PC-9 (cell line): ENCODE measurements at regions of chr3 and their contacts with region 1.

Region 1: GRCh38 chr3:42118762-42119361 is 27.7 kb downstream of the TRAK1 start:
- DNase-seq: peak; percentile 53 to 68
- H3K4me3 ChIP-seq: no peak overlapping the region
- H3K27ac ChIP-seq: no peak overlapping the region
- H3K4me1 ChIP-seq: peaks cover 28% of the 10 kb centered on the region
- H3K27me3 ChIP-seq: no peaks in the 10 kb centered on the region
- CTCF ChIP-seq: peak; percentile 66

Region 2: GRCh38 chr3:42080452-42080891 is 38.4 kb before region 1 on chr3:
- CTCF ChIA-PET with region 1: no interaction called
- POLR2A ChIA-PET with region 1: no interaction called
- intact Hi-C with region 1: loop called (anchors 2 kb)
- DNase-seq: peak; percentile 86 to 96
- H3K4me3 ChIP-seq: peak overlapping the region; percentile 31; the same call in 1 of the 2 replicates
- H3K27ac ChIP-seq: peak overlapping the region; percentile 87
- H3K4me1 ChIP-seq: peaks cover 42% of the 10 kb centered on the region
- H3K27me3 ChIP-seq: no peaks in the 10 kb centered on the region
- CTCF ChIP-seq: no peak

Region 3: DNA sequence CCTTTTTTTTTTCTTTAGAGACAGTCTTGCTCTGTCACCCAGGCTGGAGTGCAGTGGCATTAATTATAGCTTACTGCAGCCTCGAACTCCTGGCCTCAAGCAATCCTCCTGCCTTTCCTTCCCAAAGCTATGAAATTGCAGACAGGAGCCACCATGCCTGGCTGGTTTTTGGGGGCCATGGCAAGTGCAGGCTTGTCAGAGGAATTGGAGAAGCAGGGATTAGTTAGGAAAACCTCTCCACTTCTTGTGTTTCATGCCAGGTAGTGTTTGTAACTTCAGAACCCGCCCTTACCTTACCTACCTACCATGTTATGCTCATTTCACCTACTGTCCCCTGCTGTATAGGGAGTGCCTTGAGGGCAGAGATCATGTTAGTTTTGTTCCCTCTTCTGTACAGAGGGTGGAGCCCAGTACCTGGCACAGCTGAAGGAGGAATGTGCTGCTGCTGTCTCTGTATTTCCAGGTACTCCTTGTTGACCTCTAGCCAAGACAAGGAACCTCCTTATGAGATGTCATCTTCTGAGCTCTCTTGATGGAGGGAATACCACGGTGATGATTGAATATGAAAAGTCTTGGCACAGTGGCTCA is 16.1 kb after region 1 on chr3:
- CTCF ChIA-PET with region 1: interaction called, 5 read pairs
- POLR2A ChIA-PET with region 1: no interaction called
- intact Hi-C with region 1: loop called (anchors 2 kb)
- DNase-seq: peak; percentile 58 to 72
- H3K4me3 ChIP-seq: no peak overlapping the region
- H3K27ac ChIP-seq: peak overlapping the region; percentile 17; the same call in 1 of the 2 replicates
- H3K4me1 ChIP-seq: peaks cover 26% of the 10 kb centered on the region
- H3K27me3 ChIP-seq: no peaks in the 10 kb centered on the region
- CTCF ChIP-seq: no peak

Region 4: DNA sequence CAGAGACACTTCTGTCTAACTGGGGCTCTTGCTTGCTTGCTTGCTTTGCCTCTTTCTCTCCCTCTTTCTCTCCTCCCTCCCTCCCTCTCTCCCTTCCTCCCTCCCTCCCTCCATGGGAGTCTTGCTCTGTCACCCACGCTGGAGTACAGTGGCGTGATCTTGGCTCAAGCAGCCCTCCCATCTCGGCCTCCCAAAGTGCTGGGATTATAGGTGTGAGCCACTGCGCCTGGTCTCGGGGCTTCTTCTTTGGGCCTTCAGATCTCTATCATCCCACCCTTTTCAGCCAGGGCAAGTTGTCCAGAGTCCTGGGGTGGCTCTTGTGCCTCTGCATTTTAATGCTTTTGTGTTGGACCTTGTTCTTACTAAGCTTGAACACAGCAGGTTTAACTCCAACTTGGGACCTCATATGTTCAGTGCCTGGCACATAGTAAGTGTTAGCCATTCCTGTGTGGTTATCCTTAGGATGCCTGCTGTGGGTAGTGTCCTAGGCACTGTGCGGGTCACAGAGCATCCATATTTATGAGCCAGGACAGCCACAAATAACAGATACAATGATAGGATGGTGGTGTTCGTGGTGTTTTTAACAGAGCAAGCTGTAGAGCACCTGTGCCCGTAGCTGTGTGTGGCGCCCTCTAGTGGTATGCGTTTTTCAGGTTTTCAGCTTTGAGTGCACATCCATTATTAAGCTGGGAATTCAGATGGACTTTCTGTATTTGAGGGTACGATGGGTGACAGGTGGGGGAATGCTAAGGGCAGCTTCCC is 72.0 kb after region 1 on chr3:
- CTCF ChIA-PET with region 1: interaction called, 39 read pairs
- POLR2A ChIA-PET with region 1: no interaction called
- intact Hi-C with region 1: loop called (anchors 1 kb)
- DNase-seq: peak; percentile 45 to 66
- H3K4me3 ChIP-seq: no peak overlapping the region
- H3K27ac ChIP-seq: no peak overlapping the region
- H3K4me1 ChIP-seq: no peaks in the 10 kb centered on the region
- H3K27me3 ChIP-seq: no peaks in the 10 kb centered on the region
- CTCF ChIP-seq: peak; percentile 88

Region 5: GRCh38 chr3:42443819-42444436 is 325.1 kb after region 1 on chr3:
- CTCF ChIA-PET with region 1: no interaction called
- POLR2A ChIA-PET with region 1: no interaction called
- intact Hi-C with region 1: loop called (anchors 5 kb)
- DNase-seq: peak; percentile 59 to 83
- H3K4me3 ChIP-seq: no peak overlapping the region
- H3K27ac ChIP-seq: no peak overlapping the region
- H3K4me1 ChIP-seq: no peaks in the 10 kb centered on the region
- H3K27me3 ChIP-seq: no peaks in the 10 kb centered on the region
- CTCF ChIP-seq: peak; percentile 94